GM12878 (cell line): ENCODE measurements at regions of chr10 and their contacts with region 1.

Region 1: GRCh38 chr10:13299437-13300287 is at the start of gene PHYH:
- DNase-seq: no peak
- ATAC-seq: peak; percentile 91
- H3K4me3 ChIP-seq: peak within 1 kb of the TSS; percentile 66
- H3K27ac ChIP-seq: no peak within 1 kb of the TSS; the same call in 1 of the 2 replicates
- H3K4me1 ChIP-seq: peaks cover 3% of the 10 kb centered on the region; the same call in 1 of the 2 replicates
- H3K27me3 ChIP-seq: no peaks in the 10 kb centered on the region
- CTCF ChIP-seq: no peak
- EP300 ChIP-seq: no peak
- POLR2A ChIP-seq: peak; percentile 79
- RAD21 ChIP-seq: no peak
- polyA plus RNA-seq, gene PHYH: 5.8 to 8.4 TPM

Region 2: DNA sequence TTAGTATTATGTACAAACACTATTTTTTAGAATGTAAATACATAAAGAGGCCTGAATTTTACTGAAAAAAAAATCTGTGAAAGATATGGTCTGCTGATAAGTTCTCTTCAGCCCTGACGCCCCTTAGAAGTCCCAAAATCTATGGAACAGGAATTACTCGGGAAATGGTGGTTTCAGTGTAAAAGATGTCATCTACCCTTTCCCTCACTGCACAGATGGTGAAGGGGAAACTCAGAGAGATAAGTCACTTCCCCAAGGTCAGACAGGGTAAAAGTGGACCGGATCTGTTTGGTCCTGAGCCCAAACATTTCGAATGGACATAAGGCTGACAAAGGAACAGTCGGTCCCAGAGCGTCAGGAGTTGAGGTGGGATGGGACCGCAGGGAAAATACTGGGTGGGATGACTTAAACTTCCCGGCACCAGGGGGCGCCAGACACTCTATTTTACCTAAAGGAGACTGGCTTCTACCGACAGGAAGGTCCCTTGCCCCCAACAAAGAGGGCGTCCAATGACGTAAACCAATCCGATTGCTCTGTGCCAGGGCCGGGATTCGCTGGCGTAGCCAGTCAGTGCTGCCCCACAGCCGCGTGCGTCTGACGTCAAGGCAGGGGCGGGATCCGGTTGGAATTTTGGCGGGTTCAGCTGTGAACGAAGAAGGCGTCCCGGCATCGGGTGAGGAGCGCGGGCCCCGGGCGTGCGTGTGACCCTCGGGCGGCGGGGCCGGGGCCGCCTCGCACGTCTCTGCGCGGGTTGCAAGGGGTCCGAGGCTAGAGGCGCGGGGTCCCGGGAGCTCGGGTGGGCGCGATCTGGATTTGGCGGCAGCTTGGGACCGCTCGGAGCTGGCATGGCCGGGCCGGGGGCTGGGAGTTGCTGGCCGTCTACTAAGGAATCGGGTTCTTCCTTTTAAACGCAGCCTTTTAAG is 138.5 kb before region 1 on chr10 and contains the start of gene MCM10:
- CTCF ChIA-PET with region 1: interaction called, 67 read pairs
- POLR2A ChIA-PET with region 1: interaction called, 5 read pairs
- RAD21 ChIA-PET with region 1: interaction called, 23 read pairs
- SMC1A ChIA-PET with region 1: interaction called, 13 read pairs
- in situ Hi-C with region 1: loop called (anchors 5 kb)
- intact Hi-C with region 1: loop called (anchors 1 kb)
- DNase-seq: peak; percentile 96
- ATAC-seq: peak; percentile 99
- H3K4me3 ChIP-seq: peak within 1 kb of the TSS; percentile 81
- H3K27ac ChIP-seq: peak within 1 kb of the TSS; percentile 41
- H3K4me1 ChIP-seq: peaks cover 7% of the 10 kb centered on the region
- H3K27me3 ChIP-seq: no peaks in the 10 kb centered on the region
- CTCF ChIP-seq: peak; percentile 73 to 93 (median 79)
- EP300 ChIP-seq: no peak
- POLR2A ChIP-seq: peak; percentile 73
- RAD21 ChIP-seq: peak; percentile 67
- polyA plus RNA-seq, gene MCM10: 5.8 to 6.8 TPM

Region 3: GRCh38 chr10:13206546-13207443 is 92.9 kb before region 1 on chr10:
- CTCF ChIA-PET with region 1: interaction called, 23 read pairs
- POLR2A ChIA-PET with region 1: no interaction called
- RAD21 ChIA-PET with region 1: interaction called, 8 read pairs
- SMC1A ChIA-PET with region 1: interaction called, 9 read pairs
- in situ Hi-C with region 1: no loop called
- intact Hi-C with region 1: loop called (anchors 1 kb)
- DNase-seq: no peak
- ATAC-seq: no peak
- H3K4me3 ChIP-seq: no peak overlapping the region
- H3K27ac ChIP-seq: no peak overlapping the region
- H3K4me1 ChIP-seq: no peaks in the 10 kb centered on the region
- H3K27me3 ChIP-seq: no peaks in the 10 kb centered on the region
- CTCF ChIP-seq: peak; percentile 27 to 39 (median 36); a peak in 5 of 6 replicates
- EP300 ChIP-seq: no peak
- POLR2A ChIP-seq: no peak
- RAD21 ChIP-seq: peak; percentile 37

Region 4: DNA sequence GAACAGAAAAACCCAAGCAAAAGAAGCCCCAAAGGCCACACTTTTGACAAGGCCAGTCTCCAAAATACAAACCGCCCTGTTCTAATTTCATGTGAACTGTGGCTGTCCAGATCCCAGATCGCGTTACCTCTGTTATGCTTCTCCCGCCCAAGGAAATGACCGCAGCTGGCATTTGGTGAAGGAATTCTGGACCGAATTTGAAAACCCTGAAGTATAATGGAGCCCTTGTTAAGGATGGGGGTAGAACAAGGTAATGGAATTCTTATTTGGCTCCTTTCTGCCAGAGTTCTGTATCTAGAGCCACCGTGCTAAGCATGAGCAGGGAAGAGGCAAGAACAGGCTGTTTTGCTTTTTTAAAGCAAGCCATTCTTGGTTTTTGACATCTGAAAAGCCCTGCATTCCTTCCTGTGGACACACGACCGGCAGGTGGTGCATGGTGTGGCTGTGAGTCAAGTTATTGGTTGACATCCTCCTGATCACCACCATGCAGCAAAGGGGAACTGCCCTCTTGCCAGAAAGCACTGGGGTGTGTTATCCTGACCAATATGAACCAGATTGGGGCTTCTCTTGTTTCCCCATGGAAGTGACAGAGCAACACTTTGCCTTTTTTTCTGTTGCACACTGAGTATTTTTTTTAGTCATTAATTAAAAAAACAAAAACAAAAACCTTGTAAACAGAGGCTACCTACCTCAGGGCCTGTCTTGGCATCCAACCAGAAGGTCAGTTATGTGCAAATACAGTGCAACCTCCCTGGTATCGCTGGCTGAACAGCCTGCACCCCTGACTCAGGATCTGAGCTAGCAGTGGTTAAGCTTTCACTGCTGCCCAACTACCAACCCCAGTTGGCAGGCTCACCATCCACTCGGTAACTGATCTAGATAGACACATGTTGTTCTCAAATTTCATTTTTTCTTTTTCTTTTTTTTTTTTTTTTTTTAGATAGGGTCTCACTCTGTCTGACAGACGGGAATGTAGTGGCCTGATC is 79.7 kb before region 1 on chr10:
- CTCF ChIA-PET with region 1: interaction called, 3 read pairs
- POLR2A ChIA-PET with region 1: no interaction called
- RAD21 ChIA-PET with region 1: no interaction called
- SMC1A ChIA-PET with region 1: no interaction called
- in situ Hi-C with region 1: no loop called
- intact Hi-C with region 1: loop called (anchors 1 kb)
- DNase-seq: peak; percentile 5
- ATAC-seq: peak; percentile 96
- H3K4me3 ChIP-seq: no peak overlapping the region
- H3K27ac ChIP-seq: no peak overlapping the region
- H3K4me1 ChIP-seq: no peaks in the 10 kb centered on the region
- H3K27me3 ChIP-seq: no peaks in the 10 kb centered on the region
- CTCF ChIP-seq: peak; percentile 37 to 39 (median 37); a peak in 5 of 6 replicates
- EP300 ChIP-seq: no peak
- POLR2A ChIP-seq: no peak
- RAD21 ChIP-seq: peak; percentile 33

Region 5: GRCh38 chr10:13271552-13272163 is 28.0 kb before region 1 on chr10:
- CTCF ChIA-PET with region 1: interaction called, 22 read pairs
- POLR2A ChIA-PET with region 1: no interaction called
- RAD21 ChIA-PET with region 1: interaction called, 7 read pairs
- SMC1A ChIA-PET with region 1: interaction called, 5 read pairs
- in situ Hi-C with region 1: no loop called
- intact Hi-C with region 1: loop called (anchors 1 kb)
- DNase-seq: no peak
- ATAC-seq: peak; percentile 97
- H3K4me3 ChIP-seq: no peak overlapping the region
- H3K27ac ChIP-seq: no peak overlapping the region
- H3K4me1 ChIP-seq: peaks cover 4% of the 10 kb centered on the region; the same call in 1 of the 2 replicates
- H3K27me3 ChIP-seq: no peaks in the 10 kb centered on the region
- CTCF ChIP-seq: peak; percentile 55 to 72 (median 62)
- EP300 ChIP-seq: no peak
- POLR2A ChIP-seq: no peak
- RAD21 ChIP-seq: peak; percentile 66

Region 6: GRCh38 chr10:13348216-13349017 is 48.8 kb after region 1 on chr10 and contains the start of gene SEPHS1:
- CTCF ChIA-PET with region 1: interaction called, 14 read pairs
- POLR2A ChIA-PET with region 1: no interaction called
- RAD21 ChIA-PET with region 1: interaction called, 13 read pairs
- SMC1A ChIA-PET with region 1: interaction called, 5 read pairs
- in situ Hi-C with region 1: no loop called
- intact Hi-C with region 1: no loop called
- DNase-seq: no peak
- ATAC-seq: peak; percentile 78
- H3K4me3 ChIP-seq: peak within 1 kb of the TSS; percentile 81
- H3K27ac ChIP-seq: peak within 1 kb of the TSS; percentile 77
- H3K4me1 ChIP-seq: peaks cover 20% of the 10 kb centered on the region
- H3K27me3 ChIP-seq: no peaks in the 10 kb centered on the region
- CTCF ChIP-seq: peak in 1 of 3 experiments; percentile 11; a peak in 1 of 6 replicates
- EP300 ChIP-seq: no peak
- POLR2A ChIP-seq: peak; percentile 77
- RAD21 ChIP-seq: no peak
- polyA plus RNA-seq, gene SEPHS1: 14.7 to 20.8 TPM